Body of pancreas (tissue), 4 donors: ENCODE measurements at regions of chr20 and their contacts with region 1.

Region 1: GRCh38 chr20:1392823-1393506 is at the start of gene FKBP1A:
- DNase-seq: peak; percentile 92 to 96 (median 95)
- ATAC-seq: peak; percentile 97
- H3K4me3 ChIP-seq: peak within 1 kb of the TSS; percentile 73 to 79
- H3K27ac ChIP-seq: peak within 1 kb of the TSS; percentile 53 to 82 (median 72)
- H3K4me1 ChIP-seq: peaks cover 40% of the 10 kb centered on the region
- H3K27me3 ChIP-seq: no peaks in the 10 kb centered on the region
- CTCF ChIP-seq: peak in 4 of 7 experiments; percentile 16 to 46 (median 30)
- POLR2A ChIP-seq: peak; percentile 69 to 89 (median 74)
- total RNA-seq, gene FKBP1A: 47.5 to 57.7 TPM

Region 2: DNA sequence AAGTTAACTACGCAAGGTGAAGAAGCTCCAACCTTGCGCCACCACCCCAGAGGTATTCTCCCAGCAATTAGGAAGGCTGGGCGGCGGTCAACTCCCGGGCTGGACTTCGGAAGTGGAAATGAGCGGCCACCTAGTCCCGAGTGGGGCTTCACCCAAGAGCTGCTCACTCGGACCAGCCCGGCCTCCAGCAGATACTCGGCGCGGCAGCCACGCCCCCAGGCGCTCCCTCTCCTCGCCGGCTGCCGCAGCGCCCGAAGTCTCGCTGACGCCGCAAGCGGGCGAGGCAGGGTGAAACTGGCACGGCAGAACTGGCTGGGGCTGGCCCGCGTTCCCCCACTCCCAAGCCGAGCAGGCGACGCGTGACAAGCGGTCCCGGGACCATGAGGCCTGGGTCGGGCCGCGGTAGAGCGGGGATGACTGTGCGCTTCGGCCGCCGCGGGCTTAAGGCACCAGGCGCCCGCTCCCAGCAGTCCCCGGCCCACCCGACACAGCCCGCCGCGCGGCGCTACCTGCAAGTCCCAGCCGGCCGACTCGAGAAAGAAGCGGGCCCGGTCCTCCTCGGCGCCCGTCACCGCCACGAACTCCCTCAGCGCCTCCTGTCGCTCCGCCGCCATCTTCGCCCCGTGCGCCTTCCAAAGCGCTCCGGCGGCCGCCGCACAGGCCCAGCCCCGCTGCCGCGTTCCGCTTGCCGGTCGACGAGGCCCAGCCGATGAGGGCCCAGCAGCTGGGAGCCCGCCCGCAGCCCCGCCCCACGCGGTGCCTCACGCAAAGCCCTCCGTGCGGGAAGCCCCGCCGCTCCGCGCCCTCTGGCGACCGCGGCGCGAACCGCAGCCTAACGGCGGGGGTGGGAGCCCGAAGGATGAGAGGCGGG is 73.5 kb after region 1 on chr20 and contains the start of gene NSFL1C:
- intact Hi-C with region 1: loop called (anchors 10 kb)
- DNase-seq: peak; percentile 97
- ATAC-seq: peak; percentile 87
- H3K4me3 ChIP-seq: peak within 1 kb of the TSS; percentile 87 to 99
- H3K27ac ChIP-seq: peak within 1 kb of the TSS; percentile 56 to 95 (median 88)
- H3K4me1 ChIP-seq: peaks cover 61% of the 10 kb centered on the region
- H3K27me3 ChIP-seq: no peaks in the 10 kb centered on the region
- CTCF ChIP-seq: peak; percentile 82 to 99 (median 98)
- POLR2A ChIP-seq: peak; percentile 57 to 72 (median 69)
- total RNA-seq, gene NSFL1C: 23.1 to 33.7 TPM